GM10248 (cell line): ENCODE measurements at regions of chr3 and their contacts with region 1.

Region 1: GRCh38 chr3:192423003-192423349 is 304.4 kb downstream of the FGF12 start:
- DNase-seq: no peak
- CTCF ChIP-seq: no peak

Region 2: DNA sequence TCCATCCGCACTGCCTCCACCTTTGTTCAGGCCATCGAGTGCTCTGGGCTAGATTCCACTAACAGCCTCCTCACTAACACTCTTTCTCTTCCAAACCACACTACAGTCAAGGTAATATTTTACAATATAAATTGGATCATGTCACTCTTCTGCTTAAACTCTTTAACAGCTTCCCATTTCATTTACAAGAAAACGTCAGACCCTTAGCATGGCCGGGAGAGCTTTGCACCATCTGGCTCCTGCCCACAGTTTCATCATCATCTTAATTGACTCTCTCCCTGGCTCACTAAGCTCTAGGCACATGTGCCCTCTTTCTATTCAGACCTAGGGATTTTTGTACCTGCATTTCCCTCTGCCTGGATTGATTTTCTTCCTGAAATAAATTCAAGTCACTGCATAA is 50.4 kb before region 1 on chr3:
- CTCF ChIA-PET with region 1: no interaction called
- POLR2A ChIA-PET with region 1: no interaction called
- DNase-seq: no peak
- CTCF ChIP-seq: no peak

Region 3: GRCh38 chr3:192433704-192434103 is 10.7 kb after region 1 on chr3:
- CTCF ChIA-PET with region 1: interaction called, 11 read pairs
- POLR2A ChIA-PET with region 1: no interaction called
- DNase-seq: no peak
- CTCF ChIP-seq: no peak